ENCODE measurements at regions of chr18 and their contacts with region 1.

Region 1: DNA sequence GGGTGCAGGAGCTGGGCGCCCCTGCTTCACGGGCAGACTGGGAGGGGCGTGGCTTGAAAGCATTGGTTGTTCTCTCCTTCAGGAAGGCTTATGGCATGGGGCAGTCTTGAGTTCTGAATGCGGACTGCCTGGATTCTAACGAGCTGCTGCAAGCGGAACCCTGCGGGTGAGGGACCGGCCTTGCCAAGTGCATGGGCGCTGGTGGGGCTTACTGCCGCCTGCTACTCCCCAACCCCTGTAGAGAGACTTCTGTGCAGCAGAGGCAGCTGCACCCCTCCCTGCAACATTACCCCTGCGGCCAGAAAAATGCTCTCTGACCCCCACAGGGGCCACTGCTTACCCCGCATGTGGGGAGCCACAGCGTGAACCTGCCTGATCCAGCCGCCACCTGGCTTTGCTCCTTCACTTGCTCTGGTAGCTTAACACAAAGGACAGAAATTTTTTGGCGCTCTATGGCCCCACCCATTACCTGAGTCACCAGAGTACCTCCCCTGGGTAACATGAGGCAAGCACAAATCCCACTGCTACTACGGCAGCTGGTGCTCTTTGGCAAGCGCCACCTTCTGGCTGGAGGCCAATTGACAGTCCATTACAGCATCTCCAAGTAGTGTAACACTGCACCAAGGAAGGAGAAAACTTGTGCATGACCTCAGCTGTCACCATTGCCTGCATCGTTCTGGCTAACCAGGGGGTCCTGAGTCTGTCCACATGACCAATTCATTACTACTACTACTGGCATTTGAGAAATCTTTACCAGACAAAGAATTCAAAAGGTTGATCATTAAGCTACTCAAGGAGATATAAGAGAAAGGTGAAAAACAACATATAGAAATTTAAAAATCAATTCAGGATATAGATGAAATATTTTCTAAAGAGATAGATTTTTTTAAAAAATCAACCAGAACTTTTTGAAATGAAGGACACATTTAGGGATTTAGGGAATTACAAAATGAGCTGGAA is 35.4 kb downstream of the MYL12B start:
- DNase-seq: peak; percentile 69
- ATAC-seq: peak; percentile 99
- H3K4me3 ChIP-seq: peak overlapping the region; percentile 71
- H3K27ac ChIP-seq: peak overlapping the region; percentile 33
- H3K4me1 ChIP-seq: peaks cover 5% of the 10 kb centered on the region; the same call in 1 of the 2 replicates
- H3K27me3 ChIP-seq: no peaks in the 10 kb centered on the region; a peak in 1 of 4 replicates
- CTCF ChIP-seq: peak; percentile 74 to 92 (median 77)
- EP300 ChIP-seq: no peak
- POLR2A ChIP-seq: peak; percentile 90
- RAD21 ChIP-seq: peak; percentile 41

Region 2: GRCh38 chr18:3321133-3321812 is 24.0 kb after region 1 on chr18:
- CTCF ChIA-PET with region 1: interaction called, 13 read pairs
- POLR2A ChIA-PET with region 1: no interaction called
- RAD21 ChIA-PET with region 1: no interaction called
- SMC1A ChIA-PET with region 1: interaction called, 3 read pairs
- in situ Hi-C with region 1: no loop called
- intact Hi-C with region 1: no loop called
- DNase-seq: no peak
- ATAC-seq: no peak
- H3K4me3 ChIP-seq: no peak overlapping the region
- H3K27ac ChIP-seq: no peak overlapping the region
- H3K4me1 ChIP-seq: peaks cover 9% of the 10 kb centered on the region
- H3K27me3 ChIP-seq: no peaks in the 10 kb centered on the region
- CTCF ChIP-seq: no peak
- EP300 ChIP-seq: no peak
- POLR2A ChIP-seq: no peak
- RAD21 ChIP-seq: no peak

Region 3: DNA sequence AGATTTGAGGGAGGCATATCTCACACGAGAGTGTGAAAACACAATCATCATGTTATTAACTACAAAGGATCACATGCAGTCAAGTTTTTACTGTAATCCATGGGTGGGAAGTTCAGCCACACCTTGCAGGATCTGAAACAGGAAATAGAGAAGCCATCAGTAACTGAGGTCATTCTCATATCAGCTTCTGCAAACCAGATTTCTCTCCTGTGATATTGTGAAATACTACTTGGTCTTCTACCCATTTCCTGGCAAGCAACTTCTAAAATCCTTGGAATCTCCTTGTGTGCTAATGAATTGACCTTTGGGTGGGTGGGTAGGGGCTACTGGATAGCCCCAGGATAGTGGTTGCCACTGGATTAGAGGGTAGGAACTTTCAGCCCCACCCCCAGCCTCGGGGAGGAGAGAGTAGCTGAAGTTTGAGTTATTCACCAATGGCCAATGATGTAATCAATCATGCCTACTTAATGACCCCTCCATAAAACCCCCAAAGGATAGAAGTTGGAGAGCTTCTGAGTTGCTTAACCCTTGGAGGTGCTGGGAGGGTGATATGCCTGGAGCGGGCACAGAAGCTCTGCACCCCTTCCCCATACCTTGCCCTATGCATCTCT is 127.1 kb after region 1 on chr18:
- CTCF ChIA-PET with region 1: no interaction called
- POLR2A ChIA-PET with region 1: interaction called, 10 read pairs
- RAD21 ChIA-PET with region 1: no interaction called
- SMC1A ChIA-PET with region 1: no interaction called
- in situ Hi-C with region 1: no loop called
- intact Hi-C with region 1: no loop called
- DNase-seq: no peak
- ATAC-seq: no peak
- H3K4me3 ChIP-seq: no peak overlapping the region
- H3K27ac ChIP-seq: no peak overlapping the region
- H3K4me1 ChIP-seq: no peaks in the 10 kb centered on the region
- H3K27me3 ChIP-seq: no peaks in the 10 kb centered on the region
- CTCF ChIP-seq: no peak
- EP300 ChIP-seq: no peak
- POLR2A ChIP-seq: no peak
- RAD21 ChIP-seq: no peak